Activated CD8-positive, alpha-beta memory T cell treated with anti-CD3 and anti-CD28 coated beads, Interleukin-2, amount 10 ng/mL, durations not matched to agents 7 days and 5 days (primary cell): ENCODE measurements at regions of chr11 and their contacts with region 1.

Region 1: DNA sequence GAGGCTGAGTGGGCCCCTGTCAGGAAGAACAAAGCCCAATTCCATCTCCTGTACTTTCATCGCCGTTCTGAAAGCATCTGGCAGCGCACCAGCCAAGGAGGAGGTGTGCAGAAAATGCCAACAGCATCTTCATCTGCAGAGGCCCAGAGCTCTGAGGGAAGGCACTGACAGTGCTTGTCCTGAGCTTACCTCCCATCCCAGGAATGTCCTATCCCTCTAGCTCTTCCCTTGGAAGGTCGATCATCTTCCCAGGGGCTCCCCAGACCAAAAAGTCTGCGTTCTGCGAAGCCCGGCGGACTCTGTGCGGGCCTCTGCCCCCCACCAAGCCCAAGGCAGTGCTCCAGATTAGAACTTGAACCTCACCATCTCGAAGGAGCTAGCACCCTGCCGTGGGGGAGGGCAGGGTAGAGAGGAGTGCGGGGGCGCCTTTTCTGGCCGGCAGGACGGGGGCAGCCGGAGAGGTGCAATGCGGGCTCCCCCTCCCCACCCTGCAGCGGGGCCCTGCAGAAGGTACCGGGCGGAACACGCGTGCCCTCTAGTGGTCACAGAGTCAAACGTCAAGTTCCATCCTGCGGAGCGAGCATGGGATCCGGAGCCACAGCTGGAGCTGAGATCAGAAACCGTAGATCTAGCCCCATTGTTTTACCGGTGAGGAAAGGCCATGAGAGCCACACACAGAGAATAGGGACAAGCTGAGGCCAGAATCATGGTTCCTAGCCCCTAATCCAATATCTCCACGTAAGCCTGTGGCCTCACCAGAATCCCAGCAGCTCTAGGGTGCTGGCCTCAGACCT is 5.0 kb downstream of the SCN2B start:
- DNase-seq: peak; percentile 77
- ATAC-seq: peak; percentile 87
- H3K4me3 Mint-ChIP-seq: no peak overlapping the region
- H3K27ac Mint-ChIP-seq: no peak overlapping the region
- H3K4me1 Mint-ChIP-seq: peaks cover 2% of the 10 kb centered on the region
- H3K27me3 Mint-ChIP-seq: peaks cover 38% of the 10 kb centered on the region

Region 2: GRCh38 chr11:117807482-117808327 is 363.8 kb before region 1 on chr11:
- CTCF ChIA-PET with region 1: interaction called, 23 read pairs
- DNase-seq: peak; percentile 85
- ATAC-seq: peak; percentile 70
- H3K4me3 Mint-ChIP-seq: no peak overlapping the region
- H3K27ac Mint-ChIP-seq: no peak overlapping the region
- H3K4me1 Mint-ChIP-seq: peaks cover 22% of the 10 kb centered on the region
- H3K27me3 Mint-ChIP-seq: peaks cover 2% of the 10 kb centered on the region

Region 3: DNA sequence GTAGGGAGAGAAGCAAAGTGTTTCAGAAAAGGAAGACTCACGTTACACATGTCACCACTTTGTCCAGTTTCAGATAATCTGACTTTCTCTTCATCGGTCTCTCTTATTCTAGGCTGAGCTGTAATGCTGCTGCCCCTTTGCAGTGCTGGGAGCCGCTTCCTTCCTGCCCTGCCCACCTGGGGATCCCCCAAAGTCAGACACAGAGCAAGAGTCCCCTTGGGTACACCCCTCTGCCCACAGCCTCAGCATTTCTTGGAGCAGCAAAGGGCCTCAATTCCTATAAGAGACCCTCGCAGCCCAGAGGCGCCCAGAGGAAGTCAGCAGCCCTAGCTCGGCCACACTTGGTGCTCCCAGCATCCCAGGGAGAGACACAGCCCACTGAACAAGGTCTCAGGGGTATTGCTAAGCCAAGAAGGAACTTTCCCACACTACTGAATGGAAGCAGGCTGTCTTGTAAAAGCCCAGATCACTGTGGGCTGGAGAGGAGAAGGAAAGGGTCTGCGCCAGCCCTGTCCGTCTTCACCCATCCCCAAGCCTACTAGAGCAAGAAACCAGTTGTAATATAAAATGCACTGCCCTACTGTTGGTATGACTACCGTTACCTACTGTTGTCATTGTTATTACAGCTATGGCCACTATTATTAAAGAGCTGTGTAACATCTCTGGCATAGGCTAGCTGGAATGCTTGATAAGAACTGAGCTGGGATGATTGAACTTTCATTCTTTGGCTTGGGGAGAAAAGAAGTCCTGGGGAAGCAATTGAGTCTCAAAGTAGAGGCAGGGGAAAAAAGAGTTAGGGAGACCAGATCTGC is 53.5 kb before region 1 on chr11:
- CTCF ChIA-PET with region 1: interaction called, 11 read pairs
- DNase-seq: peak; percentile 75
- ATAC-seq: peak; percentile 85
- H3K4me3 Mint-ChIP-seq: peak overlapping the region; percentile 46
- H3K27ac Mint-ChIP-seq: peak overlapping the region; percentile 74
- H3K4me1 Mint-ChIP-seq: peaks cover 50% of the 10 kb centered on the region
- H3K27me3 Mint-ChIP-seq: no peaks in the 10 kb centered on the region

Region 4: GRCh38 chr11:118145285-118146227 is 25.9 kb before region 1 on chr11:
- CTCF ChIA-PET with region 1: interaction called, 73 read pairs
- DNase-seq: peak; percentile 91
- ATAC-seq: peak; percentile 95
- H3K4me3 Mint-ChIP-seq: peak overlapping the region; percentile 71
- H3K27ac Mint-ChIP-seq: no peak overlapping the region
- H3K4me1 Mint-ChIP-seq: peaks cover 21% of the 10 kb centered on the region
- H3K27me3 Mint-ChIP-seq: peaks cover 60% of the 10 kb centered on the region

Region 5: DNA sequence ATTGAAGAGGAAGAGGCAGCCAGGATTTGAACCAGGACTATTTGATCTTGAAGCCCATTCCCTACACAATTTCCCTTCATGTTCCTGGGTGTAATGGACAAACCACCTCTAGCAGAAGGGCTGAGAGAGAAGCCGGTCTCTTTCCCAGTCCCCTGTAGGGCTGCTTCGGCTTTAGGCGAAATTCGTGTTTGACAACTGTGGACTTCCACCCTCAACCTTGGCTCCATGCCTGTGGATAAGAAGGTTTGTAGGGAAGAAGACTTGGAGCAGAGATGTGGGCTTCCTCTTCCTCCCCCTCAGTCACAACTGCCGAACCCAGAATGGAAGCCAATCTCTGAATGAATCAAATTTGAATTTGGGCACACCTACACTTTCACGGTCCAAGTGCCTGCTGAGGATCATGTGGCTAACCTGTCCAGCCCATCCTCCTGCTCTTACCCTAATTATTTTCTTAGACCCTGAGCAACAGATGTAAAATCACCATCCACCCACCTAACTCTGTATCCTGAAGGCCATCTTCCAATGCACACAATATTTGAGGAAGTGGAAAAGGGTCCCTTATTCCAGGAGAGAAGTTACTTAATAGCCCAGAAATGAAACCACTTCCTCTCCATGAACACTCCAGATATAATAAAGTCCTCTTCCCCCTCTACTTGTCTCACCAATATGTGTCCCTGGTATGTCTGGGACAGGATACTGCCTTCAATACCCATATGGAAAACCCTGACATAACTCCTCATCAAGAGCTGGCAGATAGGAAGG is 15.1 kb after region 1 on chr11:
- CTCF ChIA-PET with region 1: interaction called, 35 read pairs
- DNase-seq: no peak
- ATAC-seq: no peak
- H3K4me3 Mint-ChIP-seq: no peak overlapping the region
- H3K27ac Mint-ChIP-seq: no peak overlapping the region
- H3K4me1 Mint-ChIP-seq: peaks cover 4% of the 10 kb centered on the region
- H3K27me3 Mint-ChIP-seq: peaks cover 44% of the 10 kb centered on the region

Region 6: GRCh38 chr11:118211006-118211405 is 39.5 kb after region 1 on chr11:
- CTCF ChIA-PET with region 1: no interaction called
- DNase-seq: no peak
- ATAC-seq: no peak
- H3K4me3 Mint-ChIP-seq: no peak overlapping the region
- H3K27ac Mint-ChIP-seq: peak overlapping the region; percentile 9
- H3K4me1 Mint-ChIP-seq: peaks cover 92% of the 10 kb centered on the region
- H3K27me3 Mint-ChIP-seq: no peaks in the 10 kb centered on the region

Region 7: DNA sequence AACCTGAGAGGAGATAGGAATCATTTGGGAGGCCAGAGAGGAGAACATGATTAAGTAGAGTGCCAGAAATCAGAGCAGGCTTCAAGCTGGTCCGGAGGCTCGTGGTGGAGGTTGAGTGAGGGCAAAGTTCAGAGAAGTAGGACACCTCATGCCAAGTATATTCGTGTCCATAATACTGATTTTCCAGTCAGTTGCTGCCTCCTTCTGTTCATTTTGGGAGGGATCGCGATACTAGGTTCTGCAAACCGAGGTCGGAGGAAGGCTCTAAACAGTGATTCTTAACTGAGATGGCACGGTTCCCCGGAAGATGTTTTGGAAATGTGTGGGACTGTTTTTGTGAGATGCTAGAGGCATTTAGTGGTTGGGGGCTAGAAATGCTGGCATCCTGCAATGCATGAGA is 119.5 kb after region 1 on chr11:
- CTCF ChIA-PET with region 1: interaction called, 15 read pairs
- DNase-seq: peak; percentile 66
- ATAC-seq: peak; percentile 72
- H3K4me3 Mint-ChIP-seq: no peak overlapping the region
- H3K27ac Mint-ChIP-seq: no peak overlapping the region
- H3K4me1 Mint-ChIP-seq: peaks cover 20% of the 10 kb centered on the region
- H3K27me3 Mint-ChIP-seq: no peaks in the 10 kb centered on the region